ENCODE measurements at regions of chr11 and their contacts with region 1.

Region 1: DNA sequence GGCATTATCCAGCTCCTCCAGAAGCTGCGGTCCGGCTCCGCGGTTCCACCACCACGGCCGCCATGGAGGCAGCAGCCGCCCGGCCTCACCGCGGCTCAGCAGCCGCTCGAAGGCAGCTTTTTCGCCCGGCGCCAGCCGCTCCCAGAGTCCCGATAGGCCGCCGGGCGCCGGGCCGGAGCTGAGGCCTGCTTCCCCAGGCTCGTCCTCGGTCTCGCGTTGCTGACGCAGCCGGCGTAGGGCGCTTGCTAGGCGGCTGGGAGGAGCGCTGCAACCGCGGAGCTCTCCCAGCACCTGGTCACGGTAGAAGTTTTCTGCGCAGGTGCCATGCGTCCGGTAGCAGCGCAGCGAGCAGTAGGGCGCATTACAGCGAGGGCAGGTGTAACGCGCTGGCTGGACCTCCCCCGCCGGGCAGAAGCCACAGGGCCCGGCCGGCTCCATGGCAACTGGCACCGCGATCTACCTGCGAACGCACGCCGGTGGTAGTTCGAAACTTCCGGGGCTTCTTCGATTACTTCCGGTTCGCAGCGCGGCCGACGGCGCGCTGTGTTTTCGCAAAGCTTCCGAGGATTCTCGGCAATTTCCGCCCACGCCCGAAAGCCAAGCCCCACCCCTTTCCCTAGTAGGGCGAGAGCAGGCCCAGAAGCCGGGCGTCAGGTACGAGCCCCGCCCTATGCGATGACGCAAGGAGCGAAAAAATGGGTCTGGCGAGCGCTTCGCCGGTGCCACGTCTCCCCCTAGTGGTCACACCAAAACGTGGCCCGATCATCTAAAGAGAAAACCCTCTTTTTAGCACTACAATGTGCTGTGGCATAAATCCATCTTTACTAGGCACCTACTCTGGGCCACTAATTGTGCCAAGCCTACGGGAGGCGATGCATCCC is at the start of gene ZNHIT2:
- DNase-seq: peak; percentile 100
- H3K4me3 ChIP-seq: peak within 1 kb of the TSS; percentile 69 to 82
- H3K4me3 Mint-ChIP-seq: peak within 1 kb of the TSS; percentile 88 to 94 (median 92)
- H3K27ac ChIP-seq: peak within 1 kb of the TSS; percentile 91
- H3K27ac Mint-ChIP-seq: peak within 1 kb of the TSS; percentile 95 to 99 (median 97)
- H3K4me1 ChIP-seq: peaks cover 40% of the 10 kb centered on the region
- H3K4me1 Mint-ChIP-seq: peaks cover 17 to 69% (median 42%) of the 10 kb centered on the region in 4 donors
- H3K27me3 ChIP-seq: no peaks in the 10 kb centered on the region
- H3K27me3 Mint-ChIP-seq: no peaks in the 10 kb centered on the region
- total RNA-seq, gene ZNHIT2: 15.9 to 16.5 TPM

Region 2: DNA sequence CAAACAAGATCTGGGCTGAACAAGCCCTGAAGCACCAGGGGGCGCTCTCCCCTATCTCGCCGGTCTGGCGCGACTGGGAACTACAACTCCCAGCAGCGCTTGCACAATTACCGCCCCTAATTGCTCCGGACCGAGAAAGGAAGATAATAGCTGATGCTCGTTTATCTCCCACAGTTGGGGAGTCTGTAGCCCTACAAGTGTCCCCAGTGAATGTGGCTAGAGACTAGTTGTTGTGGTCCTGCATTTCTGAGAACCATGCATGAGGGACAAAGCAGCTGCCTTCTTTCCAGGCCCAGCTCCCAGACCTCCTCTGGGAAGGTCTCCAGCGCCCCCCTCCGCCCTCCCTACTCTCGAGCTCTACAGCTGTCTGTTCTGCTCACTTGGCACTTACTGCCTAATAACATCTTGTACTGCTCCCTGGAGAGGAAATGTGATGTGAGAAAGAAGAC is 428.9 kb before region 1 on chr11:
- CTCF ChIA-PET with region 1: interaction called, 3 read pairs
- POLR2A ChIA-PET with region 1: interaction called, 4 read pairs
- intact Hi-C with region 1: loop called (anchors 1 kb)
- DNase-seq: peak; percentile 83 to 87 (median 86)
- H3K4me3 ChIP-seq: peak overlapping the region in 1 of 2 donors; percentile 26
- H3K4me3 Mint-ChIP-seq: peak overlapping the region; percentile 40 to 80 (median 54)
- H3K27ac ChIP-seq: no peak overlapping the region
- H3K27ac Mint-ChIP-seq: peak overlapping the region in 6 of 7 donors; percentile 49 to 85 (median 69)
- H3K4me1 ChIP-seq: peaks cover 11% of the 10 kb centered on the region
- H3K4me1 Mint-ChIP-seq: peaks cover 7 to 19% (median 13%) of the 10 kb centered on the region in 4 donors
- H3K27me3 ChIP-seq: peaks cover 4% of the 10 kb centered on the region
- H3K27me3 Mint-ChIP-seq: peaks cover 15 to 23% of the 10 kb centered on the region in 2 donors

Region 3: GRCh38 chr11:64846998-64847666 is 270.3 kb before region 1 on chr11:
- CTCF ChIA-PET with region 1: interaction called, 11 read pairs
- POLR2A ChIA-PET with region 1: interaction called, 11 read pairs
- intact Hi-C with region 1: loop called (anchors 2 kb)
- DNase-seq: peak; percentile 84 to 90 (median 88)
- H3K4me3 ChIP-seq: no peak overlapping the region
- H3K4me3 Mint-ChIP-seq: peak overlapping the region in 4 of 8 donors; percentile 20 to 62 (median 34)
- H3K27ac ChIP-seq: peak overlapping the region; percentile 23
- H3K27ac Mint-ChIP-seq: peak overlapping the region; percentile 11 to 89 (median 82)
- H3K4me1 ChIP-seq: peaks cover 65% of the 10 kb centered on the region
- H3K4me1 Mint-ChIP-seq: peaks cover 35 to 64% (median 49%) of the 10 kb centered on the region in 4 donors
- H3K27me3 ChIP-seq: no peaks in the 10 kb centered on the region
- H3K27me3 Mint-ChIP-seq: no peaks in the 10 kb centered on the region

Region 4: DNA sequence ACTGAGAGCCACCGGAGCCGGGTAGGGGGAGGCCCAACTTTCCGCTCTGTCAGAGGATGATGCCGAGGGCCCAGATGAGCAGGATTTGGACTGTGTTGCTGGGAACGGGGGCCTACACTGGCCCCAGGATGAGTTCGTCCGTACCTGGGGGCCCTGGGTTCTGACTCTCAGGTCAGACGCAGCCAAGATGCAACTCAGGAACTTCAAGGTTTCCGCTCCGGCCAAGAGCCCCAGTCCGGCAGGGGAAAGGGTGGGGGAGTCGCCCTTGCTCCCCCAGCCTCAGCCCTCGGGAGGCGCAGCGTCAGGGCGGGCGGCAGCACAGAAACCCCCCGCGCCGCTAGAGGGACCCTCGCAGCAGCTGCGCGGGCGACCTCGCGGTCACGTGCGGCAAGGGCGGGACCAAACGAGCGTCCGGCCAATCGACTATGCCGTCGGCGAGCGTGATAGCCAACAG is 103.7 kb before region 1 on chr11:
- CTCF ChIA-PET with region 1: interaction called, 20 read pairs
- POLR2A ChIA-PET with region 1: interaction called, 16 read pairs
- intact Hi-C with region 1: loop called (anchors 1 kb)
- DNase-seq: peak; percentile 89 to 94 (median 90)
- H3K4me3 ChIP-seq: peak overlapping the region; percentile 90 to 97
- H3K4me3 Mint-ChIP-seq: peak overlapping the region; percentile 89 to 97 (median 92)
- H3K27ac ChIP-seq: peak overlapping the region; percentile 98
- H3K27ac Mint-ChIP-seq: peak overlapping the region; percentile 95 to 98 (median 97)
- H3K4me1 ChIP-seq: peaks cover 23% of the 10 kb centered on the region
- H3K4me1 Mint-ChIP-seq: peaks cover 13 to 28% (median 23%) of the 10 kb centered on the region in 4 donors
- H3K27me3 ChIP-seq: no peaks in the 10 kb centered on the region
- H3K27me3 Mint-ChIP-seq: no peaks in the 10 kb centered on the region

Region 5: DNA sequence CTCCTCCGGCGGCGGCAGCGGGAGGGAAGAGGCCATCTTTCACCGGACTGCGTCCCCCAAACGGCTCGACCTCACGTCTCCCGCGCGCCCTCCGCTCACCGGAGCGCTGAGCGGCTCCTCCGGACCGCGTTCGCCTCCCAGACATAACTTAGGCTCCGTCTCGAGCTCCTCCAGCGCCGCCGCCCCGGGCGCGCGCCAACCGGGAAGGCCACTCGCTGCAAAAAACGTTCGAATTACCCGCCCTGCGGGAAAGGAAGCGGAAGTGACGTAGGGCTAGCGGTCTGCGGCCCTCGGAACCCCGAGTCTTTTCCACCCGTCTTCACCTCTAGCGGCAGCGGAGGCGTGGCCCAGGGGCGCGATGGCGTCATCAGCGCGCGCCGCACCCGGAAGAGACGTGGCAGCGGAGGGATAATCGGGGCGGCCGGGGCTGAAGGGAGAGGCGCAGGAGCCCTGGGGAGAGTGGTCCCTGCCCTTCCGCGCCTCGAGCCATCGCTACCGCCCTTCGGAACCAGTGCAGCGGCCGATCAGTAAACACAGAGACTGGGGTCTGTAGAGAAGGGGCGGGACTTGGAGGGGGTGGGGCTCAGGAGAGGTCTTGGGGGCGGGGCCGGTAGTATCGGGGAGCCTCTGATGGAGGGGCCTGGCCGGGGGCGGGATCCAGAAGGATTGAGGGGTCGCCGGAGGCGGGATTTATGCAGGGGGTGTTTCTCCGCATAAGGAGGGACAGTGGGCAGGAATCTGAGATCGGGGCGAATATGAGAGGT is 33.4 kb before region 1 on chr11 and contains the starts of genes CDCA5 and ZFPL1:
- CTCF ChIA-PET with region 1: interaction called, 5 read pairs
- POLR2A ChIA-PET with region 1: interaction called, 320 read pairs
- intact Hi-C with region 1: loop called (anchors 1 kb)
- DNase-seq: peak; percentile 94 to 98 (median 97)
- H3K4me3 ChIP-seq: peak within 1 kb of the TSS; percentile 74 to 75
- H3K4me3 Mint-ChIP-seq: peak within 1 kb of the TSS; percentile 92 to 96 (median 94)
- H3K27ac ChIP-seq: peak within 1 kb of the TSS; percentile 94
- H3K27ac Mint-ChIP-seq: peak within 1 kb of the TSS; percentile 97 to 99 (median 98)
- H3K4me1 ChIP-seq: peaks cover 25% of the 10 kb centered on the region
- H3K4me1 Mint-ChIP-seq: peaks cover 9 to 42% (median 26%) of the 10 kb centered on the region in 4 donors
- H3K27me3 ChIP-seq: no peaks in the 10 kb centered on the region
- H3K27me3 Mint-ChIP-seq: no peaks in the 10 kb centered on the region
- total RNA-seq, gene CDCA5: 0.41 to 0.64 TPM
- total RNA-seq, gene ZFPL1: 48.6 to 51.9 TPM

Region 6: GRCh38 chr11:65134386-65135253 is 17.2 kb after region 1 on chr11 and contains the start of gene SYVN1:
- CTCF ChIA-PET with region 1: interaction called, 23 read pairs
- POLR2A ChIA-PET with region 1: interaction called, 251 read pairs
- intact Hi-C with region 1: loop called (anchors 1 kb)
- DNase-seq: peak; percentile 92 to 95 (median 94)
- H3K4me3 ChIP-seq: peak within 1 kb of the TSS; percentile 68 to 99
- H3K4me3 Mint-ChIP-seq: peak within 1 kb of the TSS; percentile 97 to 100 (median 98)
- H3K27ac ChIP-seq: peak within 1 kb of the TSS; percentile 99
- H3K27ac Mint-ChIP-seq: peak within 1 kb of the TSS; percentile 99 to 100 (median 100)
- H3K4me1 ChIP-seq: peaks cover 30% of the 10 kb centered on the region
- H3K4me1 Mint-ChIP-seq: peaks cover 23 to 48% (median 33%) of the 10 kb centered on the region in 4 donors
- H3K27me3 ChIP-seq: no peaks in the 10 kb centered on the region
- H3K27me3 Mint-ChIP-seq: no peaks in the 10 kb centered on the region
- total RNA-seq, gene SYVN1: 74.0 to 76.5 TPM

Measured in CD4-positive, alpha-beta memory T cell (primary cell).